Naive thymus-derived CD4-positive, alpha-beta T cell (primary cell): ENCODE measurements at regions of chr5 and their contacts with region 1.

Region 1: GRCh38 chr5:123423278-123424149 is at the start of gene CEP120:
- DNase-seq: peak; percentile 86 to 98 (median 96)
- ATAC-seq: peak; percentile 98
- H3K4me3 ChIP-seq: peak within 1 kb of the TSS; percentile 73
- H3K4me3 Mint-ChIP-seq: no peak within 1 kb of the TSS
- H3K27ac ChIP-seq: peak within 1 kb of the TSS; percentile 97
- H3K27ac Mint-ChIP-seq: peak within 1 kb of the TSS in 2 of 9 donors; percentile 99 to 100
- H3K4me1 ChIP-seq: peaks cover 26 to 29% of the 10 kb centered on the region in 2 donors
- H3K4me1 Mint-ChIP-seq: peaks cover 11 to 27% (median 20%) of the 10 kb centered on the region in 7 donors
- H3K27me3 ChIP-seq: no peaks in the 10 kb centered on the region
- H3K27me3 Mint-ChIP-seq: no peaks in the 10 kb centered on the region
- total RNA-seq, gene CEP120: 35.0 to 74.6 (median 60.0) TPM

Region 2: DNA sequence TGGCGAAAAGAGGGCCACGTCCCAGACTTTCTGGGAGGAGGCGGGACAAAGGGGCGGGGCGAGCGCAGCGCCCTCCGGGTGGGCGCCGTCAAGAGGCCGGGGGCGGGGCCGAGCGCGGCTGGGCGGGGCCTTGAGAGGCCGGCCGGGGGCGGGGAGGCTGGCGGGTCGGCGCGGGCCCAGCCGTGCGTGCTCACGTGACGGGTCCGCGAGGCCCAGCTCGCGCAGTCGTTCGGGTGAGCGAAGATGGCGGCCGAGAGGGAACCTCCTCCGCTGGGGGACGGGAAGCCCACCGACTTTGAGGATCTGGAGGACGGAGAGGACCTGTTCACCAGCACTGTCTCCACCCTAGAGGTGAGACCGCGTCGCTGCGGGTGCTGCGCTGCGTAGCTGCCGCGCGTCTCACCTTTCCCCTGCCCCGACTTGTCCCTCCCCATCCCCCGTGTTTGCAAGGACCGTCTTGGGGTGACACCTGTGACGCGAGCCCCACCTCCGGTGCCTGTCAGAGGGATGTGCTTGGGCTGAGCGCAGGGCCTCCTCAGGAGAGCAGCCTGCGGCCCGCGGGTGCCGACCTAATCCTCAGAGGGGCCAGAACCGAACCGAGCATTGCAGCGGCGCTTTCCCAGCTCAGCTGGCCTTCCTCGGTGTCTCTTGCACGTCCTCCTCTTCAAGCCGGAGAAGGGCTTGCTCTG is 648.5 kb before region 1 on chr5 and contains the start of gene SNX2:
- CTCF ChIA-PET with region 1: no interaction called
- POLR2A ChIA-PET with region 1: interaction called, 9 read pairs
- intact Hi-C with region 1: loop called (anchors 1 kb)
- DNase-seq: peak; percentile 82 to 89 (median 87)
- ATAC-seq: peak; percentile 95
- H3K4me3 ChIP-seq: peak within 1 kb of the TSS; percentile 79
- H3K4me3 Mint-ChIP-seq: peak within 1 kb of the TSS; percentile 90 to 98 (median 95)
- H3K27ac ChIP-seq: peak within 1 kb of the TSS; percentile 86
- H3K27ac Mint-ChIP-seq: peak within 1 kb of the TSS; percentile 84 to 97 (median 94)
- H3K4me1 ChIP-seq: peaks cover 22 to 23% of the 10 kb centered on the region in 2 donors
- H3K4me1 Mint-ChIP-seq: peaks cover 26 to 57% (median 48%) of the 10 kb centered on the region in 7 donors
- H3K27me3 ChIP-seq: no peaks in the 10 kb centered on the region
- H3K27me3 Mint-ChIP-seq: peaks cover 0 to 16% (median under 1%) of the 10 kb centered on the region in 5 donors
- total RNA-seq, gene SNX2: 35.7 to 79.7 (median 49.5) TPM

Region 3: DNA sequence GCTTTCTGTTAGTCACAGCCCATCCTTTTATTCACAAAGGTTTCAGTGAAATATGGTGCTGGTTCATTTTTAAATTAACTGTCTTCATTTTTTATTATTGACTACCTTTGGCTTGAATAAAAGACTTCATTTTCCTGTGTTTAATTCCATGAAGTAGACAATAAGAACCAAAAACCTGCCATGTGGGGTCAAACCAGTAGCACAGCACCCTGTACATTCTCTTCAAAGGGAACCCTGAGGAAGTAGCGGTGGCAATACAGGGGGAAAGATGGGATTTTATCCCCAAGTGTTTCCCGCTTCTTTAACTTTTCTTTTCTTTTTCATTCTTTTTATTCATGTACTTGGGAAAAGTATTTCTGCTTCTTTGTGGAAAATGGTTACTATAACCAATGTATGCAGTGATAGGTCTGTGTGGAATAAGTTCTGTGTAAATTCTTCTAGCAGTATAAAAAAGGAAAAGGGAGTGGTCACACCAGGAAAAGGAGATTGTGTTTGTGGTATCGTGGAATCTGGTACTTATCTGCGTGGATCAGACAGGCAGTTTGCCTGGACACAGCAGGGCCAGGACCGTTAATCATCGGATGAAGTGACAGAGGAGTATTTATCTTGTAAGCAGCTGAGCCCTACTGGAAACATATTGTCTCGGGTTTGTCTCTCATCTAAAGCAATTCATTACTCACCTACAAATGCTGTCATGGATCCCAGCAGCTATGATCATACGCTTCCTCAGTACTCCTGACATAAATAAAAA is 481.2 kb before region 1 on chr5:
- CTCF ChIA-PET with region 1: no interaction called
- POLR2A ChIA-PET with region 1: no interaction called
- intact Hi-C with region 1: no loop called
- DNase-seq: no peak
- ATAC-seq: no peak
- H3K4me3 ChIP-seq: no peak overlapping the region
- H3K4me3 Mint-ChIP-seq: no peak overlapping the region
- H3K27ac ChIP-seq: no peak overlapping the region
- H3K27ac Mint-ChIP-seq: no peak overlapping the region
- H3K4me1 ChIP-seq: no peaks in the 10 kb centered on the region
- H3K4me1 Mint-ChIP-seq: no peaks in the 10 kb centered on the region
- H3K27me3 ChIP-seq: no peaks in the 10 kb centered on the region
- H3K27me3 Mint-ChIP-seq: peaks cover 0 to 8% (median 0%) of the 10 kb centered on the region in 5 donors

Region 4: DNA sequence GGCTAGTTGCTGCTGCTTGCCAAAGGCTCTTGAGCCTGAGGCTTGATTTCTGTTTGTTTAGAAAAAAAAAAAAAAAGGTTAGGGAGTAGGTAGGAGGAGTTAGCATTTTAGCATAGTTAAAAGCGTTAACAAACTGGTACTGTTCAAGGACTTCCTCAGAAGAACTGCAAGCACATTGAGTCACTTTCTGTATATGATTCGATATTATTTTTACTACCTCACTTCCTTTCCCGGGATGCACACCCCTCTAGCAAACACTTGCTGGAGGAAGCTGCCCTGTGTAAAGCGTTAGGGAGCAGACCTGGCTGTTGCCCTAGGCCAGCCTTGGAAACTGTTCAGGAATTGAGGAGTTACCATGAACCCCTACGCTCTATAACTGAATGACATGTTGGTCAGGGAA is 15.4 kb after region 1 on chr5:
- CTCF ChIA-PET with region 1: interaction called, 3 read pairs
- POLR2A ChIA-PET with region 1: interaction called, 6 read pairs
- intact Hi-C with region 1: loop called in 1 of 2 experiments (anchors 1 kb)
- DNase-seq: peak in 1 of 9 donors; percentile 50
- ATAC-seq: peak; percentile 60
- H3K4me3 ChIP-seq: no peak overlapping the region
- H3K4me3 Mint-ChIP-seq: peak overlapping the region in 1 of 10 donors; percentile 50
- H3K27ac ChIP-seq: no peak overlapping the region
- H3K27ac Mint-ChIP-seq: peak overlapping the region in 2 of 9 donors; percentile 12 to 82
- H3K4me1 ChIP-seq: no peaks in the 10 kb centered on the region
- H3K4me1 Mint-ChIP-seq: peaks cover 0 to 32% (median 0%) of the 10 kb centered on the region in 7 donors
- H3K27me3 ChIP-seq: no peaks in the 10 kb centered on the region
- H3K27me3 Mint-ChIP-seq: peaks cover 0 to 2% (median 0%) of the 10 kb centered on the region in 5 donors

Region 5: GRCh38 chr5:123460296-123460729 is 36.8 kb after region 1 on chr5:
- CTCF ChIA-PET with region 1: interaction called, 3 read pairs
- POLR2A ChIA-PET with region 1: interaction called, 4 read pairs
- intact Hi-C with region 1: loop called in 1 of 2 experiments (anchors 1 kb)
- DNase-seq: peak in 8 of 9 donors; percentile 2 to 62 (median 14)
- ATAC-seq: peak; percentile 83
- H3K4me3 ChIP-seq: no peak overlapping the region
- H3K4me3 Mint-ChIP-seq: peak overlapping the region in 2 of 10 donors; percentile 1 to 2
- H3K27ac ChIP-seq: no peak overlapping the region
- H3K27ac Mint-ChIP-seq: peak overlapping the region in 8 of 9 donors; percentile 1 to 31 (median 8)
- H3K4me1 ChIP-seq: no peaks in the 10 kb centered on the region
- H3K4me1 Mint-ChIP-seq: peaks cover 5 to 9% (median 8%) of the 10 kb centered on the region in 7 donors
- H3K27me3 ChIP-seq: no peaks in the 10 kb centered on the region
- H3K27me3 Mint-ChIP-seq: peaks cover 0 to 5% (median 2%) of the 10 kb centered on the region in 5 donors

Region 6: GRCh38 chr5:123610665-123611405 is 187.3 kb after region 1 on chr5:
- CTCF ChIA-PET with region 1: interaction called, 11 read pairs
- POLR2A ChIA-PET with region 1: interaction called, 6 read pairs
- intact Hi-C with region 1: loop called (anchors 1 kb)
- DNase-seq: peak in 7 of 9 donors; percentile 22 to 62 (median 45)
- ATAC-seq: peak; percentile 85
- H3K4me3 ChIP-seq: no peak overlapping the region
- H3K4me3 Mint-ChIP-seq: no peak overlapping the region
- H3K27ac ChIP-seq: no peak overlapping the region
- H3K27ac Mint-ChIP-seq: peak overlapping the region in 5 of 9 donors; percentile 2 to 79 (median 36)
- H3K4me1 ChIP-seq: no peaks in the 10 kb centered on the region
- H3K4me1 Mint-ChIP-seq: peaks cover 0 to 9% (median 0%) of the 10 kb centered on the region in 7 donors
- H3K27me3 ChIP-seq: no peaks in the 10 kb centered on the region
- H3K27me3 Mint-ChIP-seq: no peaks in the 10 kb centered on the region